Tibial artery (tissue), 4 donors: ENCODE measurements at regions of chr6 and their contacts with region 1.

Region 1: GRCh38 chr6:157756708-157757429 is 66.2 kb upstream of the SNX9 start:
- DNase-seq: peak; percentile 92 to 94
- H3K4me3 ChIP-seq: peak overlapping the region in 1 of 2 donors; percentile 30
- H3K27ac ChIP-seq: peak overlapping the region; percentile 61 to 65
- H3K4me1 ChIP-seq: peaks cover 4 to 43% (median 31%) of the 10 kb centered on the region in 4 donors
- H3K27me3 ChIP-seq: no peaks in the 10 kb centered on the region
- CTCF ChIP-seq: peak; percentile 84 to 93

Region 2: GRCh38 chr6:157823001-157823527 is 66.2 kb after region 1 on chr6 and contains the start of gene SNX9:
- intact Hi-C with region 1: loop called (anchors 2 kb)
- DNase-seq: peak; percentile 76 to 89
- H3K4me3 ChIP-seq: peak within 1 kb of the TSS; percentile 93 to 99
- H3K27ac ChIP-seq: peak within 1 kb of the TSS; percentile 100
- H3K4me1 ChIP-seq: peaks cover 0 to 28% (median 10%) of the 10 kb centered on the region in 4 donors
- H3K27me3 ChIP-seq: no peaks in the 10 kb centered on the region
- CTCF ChIP-seq: peak; percentile 11 to 48

Region 3: DNA sequence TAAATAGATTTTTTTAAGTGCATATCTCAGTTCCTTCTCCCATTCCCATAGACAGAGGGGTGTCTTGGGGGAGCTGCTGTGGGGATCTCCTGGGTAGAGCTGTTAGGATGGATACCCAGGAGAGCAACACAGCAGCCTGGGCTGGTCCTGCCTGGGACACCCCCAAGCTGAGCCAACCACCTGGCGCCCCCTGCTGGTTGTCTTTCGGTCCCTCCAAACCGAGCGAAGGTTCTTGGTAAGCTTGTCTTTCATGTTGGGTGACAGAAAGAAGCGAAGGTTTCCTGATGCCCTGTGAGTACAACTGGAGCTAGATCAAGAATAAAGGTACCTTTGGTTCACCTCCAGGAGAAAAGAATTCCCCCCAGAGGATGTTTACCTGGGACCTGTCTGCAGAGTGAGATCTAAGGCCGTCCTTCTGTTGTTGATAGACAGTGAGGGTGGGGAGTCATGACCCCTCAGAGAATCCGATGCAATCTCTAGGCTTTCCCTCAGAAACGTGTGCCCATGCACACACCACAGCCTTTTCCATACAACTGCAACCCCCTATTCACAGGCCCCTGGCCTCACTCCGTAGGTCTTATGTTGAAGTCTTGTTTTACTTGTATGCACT is 117.0 kb after region 1 on chr6:
- intact Hi-C with region 1: loop called (anchors 5 kb)
- DNase-seq: peak; percentile 62 to 84
- H3K4me3 ChIP-seq: no peak overlapping the region
- H3K27ac ChIP-seq: no peak overlapping the region
- H3K4me1 ChIP-seq: peaks cover 0 to 3% (median 0%) of the 10 kb centered on the region in 4 donors
- H3K27me3 ChIP-seq: no peaks in the 10 kb centered on the region
- CTCF ChIP-seq: peak; percentile 73 to 77

Region 4: GRCh38 chr6:158072083-158072721 is 315.3 kb after region 1 on chr6:
- intact Hi-C with region 1: loop called (anchors 10 kb)
- DNase-seq: peak; percentile 73 to 86
- H3K4me3 ChIP-seq: no peak overlapping the region
- H3K27ac ChIP-seq: peak overlapping the region in 1 of 2 donors; percentile 35
- H3K4me1 ChIP-seq: peaks cover 0 to 17% (median 12%) of the 10 kb centered on the region in 4 donors
- H3K27me3 ChIP-seq: no peaks in the 10 kb centered on the region
- CTCF ChIP-seq: peak; percentile 78 to 83